HepG2 (cell line): ENCODE measurements at regions of chr1 and their contacts with region 1.

Region 1: DNA sequence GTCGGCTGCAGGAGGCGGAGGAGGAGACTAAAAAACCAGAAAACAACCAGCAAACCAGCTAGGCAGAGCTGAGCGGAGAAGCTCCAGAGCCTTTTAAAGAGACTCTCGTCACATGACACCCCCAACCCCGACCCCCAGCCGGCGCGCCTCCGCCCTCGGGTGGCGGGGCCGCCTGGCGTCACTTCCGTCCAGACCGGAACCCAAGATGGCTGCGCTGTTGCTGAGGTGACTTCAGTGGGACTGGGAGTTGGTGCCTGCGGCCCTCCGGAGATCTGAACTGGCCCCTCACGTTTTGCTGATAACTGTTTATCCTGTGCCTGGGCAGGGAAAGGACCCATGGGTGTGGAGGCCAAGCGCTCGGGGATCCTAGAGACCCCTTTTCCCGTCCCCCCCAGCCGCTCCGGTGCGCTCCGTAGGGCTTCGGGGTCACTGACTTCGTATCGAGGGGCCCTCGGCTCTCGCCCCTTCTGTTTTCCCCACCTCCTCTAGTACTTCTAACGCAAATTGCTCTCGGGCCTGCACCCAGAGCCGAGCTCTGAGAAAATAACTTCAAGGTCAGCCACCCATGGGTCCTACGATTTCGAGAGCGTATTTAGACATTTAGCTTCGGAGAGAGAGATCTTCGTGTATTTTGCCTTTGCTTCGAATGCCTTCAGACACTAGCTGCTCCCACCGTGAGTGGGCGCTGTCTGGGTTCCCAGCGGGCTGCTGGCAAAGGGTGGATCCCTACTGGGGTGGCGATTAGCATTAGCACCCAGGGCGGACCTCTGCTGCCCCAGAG is at the start of gene SDHC:
- DNase-seq: peak; percentile 87
- ATAC-seq: peak; percentile 94
- H3K4me3 ChIP-seq: peak within 1 kb of the TSS; percentile 78 to 92 (median 79)
- H3K27ac ChIP-seq: peak within 1 kb of the TSS; percentile 95
- H3K4me1 ChIP-seq: peaks cover 76% of the 10 kb centered on the region
- H3K27me3 ChIP-seq: no peaks in the 10 kb centered on the region; a peak in 1 of 5 replicates
- CTCF ChIP-seq: peak; percentile 73
- EP300 ChIP-seq: no peak
- POLR2A ChIP-seq: peak; percentile 92 to 96
- RAD21 ChIP-seq: no peak
- total RNA-seq, gene SDHC: 27.1 and 85.0 TPM in 2 replicates

Region 2: GRCh38 chr1:161216945-161217712 is 97.3 kb before region 1 on chr1:
- CTCF ChIA-PET with region 1: no interaction called
- POLR2A ChIA-PET with region 1: interaction called, 75 read pairs
- in situ Hi-C with region 1: no loop called
- intact Hi-C with region 1: no loop called
- DNase-seq: peak; percentile 59
- ATAC-seq: peak; percentile 17
- H3K4me3 ChIP-seq: peak overlapping the region in 2 of 3 experiments; percentile 31 to 63; a peak in 3 of 6 replicates
- H3K27ac ChIP-seq: peak overlapping the region; percentile 99
- H3K4me1 ChIP-seq: peaks cover 65% of the 10 kb centered on the region
- H3K27me3 ChIP-seq: no peaks in the 10 kb centered on the region; a peak in 1 of 5 replicates
- CTCF ChIP-seq: no peak
- EP300 ChIP-seq: 0 out of 4 replicates have a peak, but pooled peaks of 1 of the 2 experiments have one; percentile 16
- POLR2A ChIP-seq: peak in 1 of 2 experiments; percentile 14; a peak in 2 of 4 replicates
- RAD21 ChIP-seq: no peak

Region 3: DNA sequence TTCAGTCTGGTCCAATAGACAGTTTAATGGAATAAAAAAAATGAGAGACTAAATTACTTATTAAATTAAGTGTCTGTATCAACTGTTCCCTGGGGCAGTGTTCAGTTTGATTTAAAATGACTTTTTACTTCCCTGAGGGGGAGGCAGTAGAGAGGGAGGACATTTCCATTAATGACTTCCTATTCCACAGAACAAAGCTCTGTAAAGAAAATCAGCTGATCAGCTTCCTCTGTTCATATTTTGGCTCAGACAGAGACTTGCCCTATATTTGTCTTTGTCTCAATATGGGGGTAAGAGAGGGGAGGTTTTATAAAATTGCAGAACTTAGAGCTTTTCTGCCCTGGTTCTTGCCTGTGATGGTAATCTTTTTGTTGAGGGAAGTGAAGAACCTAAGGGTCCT is 44.9 kb after region 1 on chr1:
- CTCF ChIA-PET with region 1: no interaction called
- POLR2A ChIA-PET with region 1: no interaction called
- in situ Hi-C with region 1: no loop called
- intact Hi-C with region 1: no loop called
- DNase-seq: no peak
- ATAC-seq: no peak
- H3K4me3 ChIP-seq: no peak overlapping the region
- H3K27ac ChIP-seq: no peak overlapping the region
- H3K4me1 ChIP-seq: no peaks in the 10 kb centered on the region
- H3K27me3 ChIP-seq: no peaks in the 10 kb centered on the region
- CTCF ChIP-seq: no peak
- EP300 ChIP-seq: no peak
- POLR2A ChIP-seq: no peak
- RAD21 ChIP-seq: no peak

Region 4: GRCh38 chr1:161389691-161390558 is 75.5 kb after region 1 on chr1:
- CTCF ChIA-PET with region 1: no interaction called
- POLR2A ChIA-PET with region 1: interaction called, 10 read pairs
- in situ Hi-C with region 1: no loop called
- intact Hi-C with region 1: no loop called
- DNase-seq: peak; percentile 91
- ATAC-seq: peak; percentile 92
- H3K4me3 ChIP-seq: peak overlapping the region; percentile 66 to 97 (median 80)
- H3K27ac ChIP-seq: peak overlapping the region; percentile 74
- H3K4me1 ChIP-seq: peaks cover 50% of the 10 kb centered on the region
- H3K27me3 ChIP-seq: no peaks in the 10 kb centered on the region; a peak in 1 of 5 replicates
- CTCF ChIP-seq: 0 out of 2 replicates have a peak, but pooled peaks have one; percentile 5
- EP300 ChIP-seq: no peak; a peak in 1 of 4 replicates
- POLR2A ChIP-seq: peak; percentile 93 to 95
- RAD21 ChIP-seq: peak; percentile 14; the same call in 1 of the 2 replicates